Activated T-helper 2 cell treated with anti-CD3 and anti-CD28 coated beads, Interferon-gamma antibody, Interleukin-2, Interleukin-4, amounts not matched to agents 10 μg/mL and 5 μg/mL and 100 μg/mL, durations not matched to agents 14 hours and 24 hours and 36 hours (primary cell): ENCODE measurements at regions of chr17 and their contacts with region 1.

Region 1: DNA sequence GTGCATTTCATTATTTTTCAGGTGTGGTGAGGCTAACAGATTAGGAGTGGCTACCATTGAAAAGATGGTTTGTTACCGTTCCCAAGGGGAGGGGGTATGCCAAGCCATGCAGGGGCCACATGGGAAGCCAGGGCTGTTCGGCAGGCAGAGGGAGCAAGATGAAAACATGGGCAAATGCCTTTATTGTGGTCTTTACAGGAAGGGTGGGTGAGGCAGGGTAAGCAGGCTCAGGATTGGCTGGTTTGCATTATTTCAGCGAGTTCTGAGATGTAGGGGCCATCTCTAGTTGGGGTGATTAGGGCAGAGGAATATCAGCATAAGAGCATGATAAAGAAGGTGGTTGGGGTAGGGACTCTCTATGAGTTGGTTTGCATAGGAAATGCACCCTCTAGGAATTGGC is 117.6 kb downstream of the CCT6B start:
- DNase-seq: no peak
- H3K4me3 Mint-ChIP-seq: no peak overlapping the region
- H3K27ac Mint-ChIP-seq: no peak overlapping the region
- H3K4me1 Mint-ChIP-seq: no peaks in the 10 kb centered on the region
- H3K27me3 Mint-ChIP-seq: no peaks in the 10 kb centered on the region

Region 2: DNA sequence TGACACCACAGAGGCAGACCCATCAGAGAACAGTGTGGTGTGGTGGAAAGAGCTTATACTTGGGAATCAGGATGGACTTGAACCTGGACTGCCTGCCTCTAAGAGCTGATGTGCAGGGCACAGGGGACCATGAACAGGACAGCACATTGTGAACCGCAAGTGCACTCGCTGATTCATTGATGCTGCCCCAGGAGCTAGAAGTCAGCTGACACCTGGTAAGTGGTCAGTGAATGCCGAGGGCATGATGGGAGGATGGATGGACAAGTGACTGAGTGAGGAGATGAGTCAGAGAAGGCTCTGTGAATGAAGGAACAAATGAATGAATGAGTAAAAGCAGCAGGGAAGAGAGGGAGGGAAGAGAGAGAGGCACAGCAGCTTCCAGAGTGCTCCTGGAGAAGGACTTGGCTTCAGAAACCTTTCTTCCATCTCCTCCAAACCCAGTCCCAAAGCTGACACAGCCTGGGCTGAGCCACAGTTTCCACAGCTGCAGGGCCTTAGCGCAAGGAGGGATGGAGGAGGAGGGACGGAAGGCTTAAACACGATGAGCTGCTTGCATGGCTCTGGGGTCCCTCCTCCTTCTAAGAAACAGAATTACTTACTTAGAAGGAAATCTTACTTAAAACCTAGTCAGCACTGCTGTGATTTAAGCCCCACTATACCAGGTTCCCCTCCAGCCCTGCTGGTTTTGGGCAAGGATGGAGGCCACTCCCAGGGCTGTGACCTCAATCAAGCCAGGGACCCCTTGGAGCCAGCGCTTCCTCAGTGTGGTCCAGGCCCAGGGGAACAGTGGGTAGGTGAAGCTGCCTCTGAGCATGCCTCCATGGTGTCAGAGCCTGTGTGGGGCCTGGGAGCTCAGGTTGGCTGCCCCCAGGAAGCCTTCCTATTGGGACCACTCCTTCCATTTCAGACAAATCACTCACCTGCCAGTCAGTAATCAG is 79.7 kb before region 1 on chr17:
- intact Hi-C with region 1: no loop called
- DNase-seq: no peak
- H3K4me3 Mint-ChIP-seq: no peak overlapping the region
- H3K27ac Mint-ChIP-seq: no peak overlapping the region
- H3K4me1 Mint-ChIP-seq: no peaks in the 10 kb centered on the region
- H3K27me3 Mint-ChIP-seq: peaks cover 2% of the 10 kb centered on the region

Region 3: GRCh38 chr17:34781571-34782108 is 62.0 kb before region 1 on chr17:
- intact Hi-C with region 1: no loop called
- DNase-seq: no peak
- H3K4me3 Mint-ChIP-seq: no peak overlapping the region
- H3K27ac Mint-ChIP-seq: no peak overlapping the region
- H3K4me1 Mint-ChIP-seq: no peaks in the 10 kb centered on the region
- H3K27me3 Mint-ChIP-seq: no peaks in the 10 kb centered on the region

Region 4: GRCh38 chr17:34797720-34798119 is 46.0 kb before region 1 on chr17:
- intact Hi-C with region 1: no loop called
- DNase-seq: no peak
- H3K4me3 Mint-ChIP-seq: no peak overlapping the region
- H3K27ac Mint-ChIP-seq: no peak overlapping the region
- H3K4me1 Mint-ChIP-seq: no peaks in the 10 kb centered on the region
- H3K27me3 Mint-ChIP-seq: peaks cover 2% of the 10 kb centered on the region

Region 5: DNA sequence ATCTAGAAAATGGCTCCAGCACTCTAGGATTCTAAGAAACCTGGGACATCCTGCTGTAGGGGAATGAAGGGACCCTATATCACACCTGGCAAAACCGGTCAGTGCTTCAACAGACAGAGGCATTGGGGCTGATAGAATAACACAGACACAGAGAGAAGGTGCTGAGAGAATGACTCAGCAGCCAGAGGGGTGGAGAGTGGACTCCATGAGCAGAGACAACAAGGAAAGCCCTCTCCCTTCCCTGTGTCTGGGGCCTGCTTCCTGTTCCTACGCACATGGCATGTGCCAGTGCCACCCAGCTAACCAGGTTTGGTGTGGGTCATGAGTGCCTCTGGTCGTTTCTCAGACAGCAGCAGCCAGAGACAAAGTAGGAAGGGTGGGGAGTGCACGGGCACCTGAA is 22.8 kb before region 1 on chr17:
- intact Hi-C with region 1: loop called (anchors 1 kb)
- DNase-seq: no peak
- H3K4me3 Mint-ChIP-seq: no peak overlapping the region
- H3K27ac Mint-ChIP-seq: no peak overlapping the region
- H3K4me1 Mint-ChIP-seq: peaks cover 5% of the 10 kb centered on the region
- H3K27me3 Mint-ChIP-seq: peaks cover 2% of the 10 kb centered on the region